Left colon (tissue), 2 donors: ENCODE measurements at regions of chr12 and their contacts with region 1.

Region 1: GRCh38 chr12:92582475-92582874 is 120.3 kb upstream of the PLEKHG7 start:
- DNase-seq: no peak
- ATAC-seq: no peak

Region 2: GRCh38 chr12:92244036-92244435 is 338.4 kb before region 1 on chr12:
- intact Hi-C with region 1: loop called in 1 of 2 experiments (anchors 10 kb)
- DNase-seq: peak in 1 of 2 donors; percentile 27
- ATAC-seq: no peak

Region 3: GRCh38 chr12:92529944-92530343 is 52.5 kb before region 1 on chr12:
- intact Hi-C with region 1: no loop called
- DNase-seq: no peak
- ATAC-seq: no peak